Sigmoid colon (tissue), 7 donors: ENCODE measurements at regions of chr4 and their contacts with region 1.

Region 1: DNA sequence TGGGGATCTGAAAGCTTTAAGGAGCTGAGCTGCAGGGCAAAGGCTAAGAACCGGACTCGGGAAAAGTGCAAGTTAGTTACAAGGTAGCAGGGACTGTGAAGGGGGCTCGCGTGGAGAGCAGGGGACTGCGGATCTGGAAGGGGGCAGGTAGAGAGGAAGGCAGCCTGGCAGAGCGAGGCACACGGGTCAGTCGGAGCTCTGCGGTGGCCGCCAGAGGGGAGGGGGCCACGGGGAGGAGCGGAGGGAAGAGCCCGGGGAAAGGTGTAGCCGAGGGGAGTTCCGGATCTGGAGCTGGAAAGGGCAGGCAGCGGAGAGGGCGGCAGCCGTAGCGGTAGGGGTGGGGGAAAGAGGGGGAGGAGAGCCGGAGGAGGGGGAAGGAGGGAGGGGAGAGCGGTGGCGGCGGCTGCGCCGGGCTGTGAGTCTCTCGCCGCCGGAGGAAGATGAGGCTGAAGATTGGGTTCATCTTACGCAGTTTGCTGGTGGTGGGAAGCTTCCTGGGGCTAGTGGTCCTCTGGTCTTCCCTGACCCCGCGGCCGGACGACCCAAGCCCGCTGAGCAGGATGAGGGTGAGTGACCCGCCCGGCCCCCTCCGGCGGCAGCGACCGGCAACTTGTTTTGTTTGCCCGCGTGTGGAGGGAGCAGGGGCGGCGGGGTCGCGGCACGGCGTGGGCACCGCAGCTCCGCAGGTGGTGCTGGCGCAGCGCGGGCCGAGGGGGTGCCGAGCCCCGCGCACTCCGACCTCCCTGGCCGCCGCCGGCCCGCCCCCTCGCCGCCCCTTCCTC is at the start of gene GALNT7:
- DNase-seq: peak; percentile 87
- H3K4me3 ChIP-seq: peak within 1 kb of the TSS; percentile 82 to 90 (median 84)
- H3K27ac ChIP-seq: peak within 1 kb of the TSS; percentile 91 to 95 (median 92)
- H3K4me1 ChIP-seq: peaks cover 0 to 28% (median 15%) of the 10 kb centered on the region in 4 donors
- H3K27me3 ChIP-seq: no peaks in the 10 kb centered on the region
- CTCF ChIP-seq: no peak
- EP300 ChIP-seq: no peak
- POLR2A ChIP-seq: no peak
- total RNA-seq, gene GALNT7: 13.2 to 18.6 (median 16.7) TPM

Region 2: GRCh38 chr4:173025131-173025530 is 143.5 kb before region 1 on chr4:
- intact Hi-C with region 1: loop called (anchors 2 kb)
- DNase-seq: no peak
- H3K4me3 ChIP-seq: no peak overlapping the region
- H3K27ac ChIP-seq: no peak overlapping the region
- H3K4me1 ChIP-seq: no peaks in the 10 kb centered on the region
- H3K27me3 ChIP-seq: no peaks in the 10 kb centered on the region
- CTCF ChIP-seq: peak in 3 of 4 experiments; percentile 64 to 75 (median 69)
- EP300 ChIP-seq: no peak
- POLR2A ChIP-seq: no peak

Region 3: DNA sequence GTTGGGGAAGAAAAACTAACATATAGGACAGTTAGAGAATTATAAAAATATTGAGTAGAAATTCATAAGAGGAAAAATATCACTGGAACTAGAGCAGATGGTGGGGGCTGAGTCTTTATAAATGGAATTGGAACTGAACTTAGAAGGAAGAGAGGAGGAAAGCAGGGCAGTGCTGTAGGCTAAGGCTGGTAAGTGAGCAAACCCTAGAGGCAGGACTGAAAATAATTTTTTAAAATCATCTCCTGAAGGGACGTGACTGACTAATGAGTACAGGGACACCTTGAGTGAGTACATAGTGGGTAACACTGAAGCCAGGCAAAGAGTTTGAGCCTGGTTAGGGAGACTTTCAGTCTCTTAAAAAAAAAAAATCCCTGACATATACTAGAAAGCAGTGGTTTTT is 63.3 kb after region 1 on chr4:
- intact Hi-C with region 1: loop called (anchors 5 kb)
- DNase-seq: no peak
- H3K4me3 ChIP-seq: no peak overlapping the region
- H3K27ac ChIP-seq: no peak overlapping the region
- H3K4me1 ChIP-seq: peaks cover 0 to 33% (median 20%) of the 10 kb centered on the region in 4 donors
- H3K27me3 ChIP-seq: no peaks in the 10 kb centered on the region
- CTCF ChIP-seq: peak in 1 of 4 experiments; percentile 23
- EP300 ChIP-seq: no peak
- POLR2A ChIP-seq: no peak

Region 4: DNA sequence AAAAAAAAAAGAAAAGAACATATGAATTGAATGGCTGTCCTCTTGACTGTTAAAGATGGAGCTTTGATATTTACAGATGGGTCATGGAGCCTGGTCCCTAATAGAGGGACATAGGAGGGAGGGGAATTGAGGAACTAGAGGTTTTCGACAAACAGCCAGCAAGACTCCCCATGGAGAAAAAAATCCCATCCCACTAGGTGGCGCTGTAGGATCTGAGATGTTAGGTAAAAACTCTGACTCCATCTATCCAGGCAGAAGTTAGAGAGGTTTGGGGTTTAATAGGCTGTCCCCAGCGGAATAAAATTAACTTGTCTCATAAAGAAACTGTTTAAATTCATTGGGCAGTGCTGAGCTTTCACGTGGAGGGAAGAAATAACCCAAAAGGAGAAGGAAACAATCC is 119.7 kb after region 1 on chr4:
- intact Hi-C with region 1: no loop called
- DNase-seq: peak; percentile 81
- H3K4me3 ChIP-seq: no peak overlapping the region
- H3K27ac ChIP-seq: no peak overlapping the region
- H3K4me1 ChIP-seq: no peaks in the 10 kb centered on the region
- H3K27me3 ChIP-seq: no peaks in the 10 kb centered on the region
- CTCF ChIP-seq: peak; percentile 16 to 48 (median 44)
- EP300 ChIP-seq: no peak
- POLR2A ChIP-seq: no peak